HEK293 (cell line): ENCODE measurements at regions of chr14 and their contacts with region 1.

Region 1: DNA sequence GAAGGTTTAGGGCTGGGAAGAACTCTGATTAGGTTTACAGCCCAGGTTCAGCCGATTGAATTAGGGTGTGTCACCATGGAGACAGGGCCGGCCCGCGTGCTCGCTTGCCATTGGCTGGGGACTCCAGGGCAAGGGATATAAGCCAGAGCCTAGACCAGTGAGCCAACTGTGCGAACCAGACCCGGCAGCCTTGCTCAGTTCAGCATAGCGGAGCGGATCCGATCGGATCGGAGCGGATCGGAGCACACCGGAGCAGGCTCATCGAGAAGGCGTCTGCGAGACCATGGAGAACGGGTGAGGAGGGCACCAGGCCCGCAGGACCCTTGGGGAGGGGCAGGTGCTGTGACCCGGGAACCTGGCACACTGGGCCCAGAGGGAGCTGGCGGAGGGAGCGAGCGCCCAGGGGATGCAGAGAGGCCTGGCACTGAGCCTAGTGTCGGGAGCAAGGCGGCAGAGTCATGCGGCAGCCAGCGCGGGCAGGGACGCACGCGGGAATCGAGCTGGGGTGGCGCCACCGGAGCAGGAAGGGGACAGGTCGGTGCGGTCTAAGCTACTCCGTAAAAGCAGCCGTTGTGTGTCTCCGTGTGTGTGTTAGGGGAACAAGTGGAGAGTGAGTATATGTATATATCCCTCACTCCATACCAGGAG is at the start of gene PNP:
- H3K4me3 ChIP-seq: peak within 1 kb of the TSS; percentile 71
- H3K27ac ChIP-seq: peak within 1 kb of the TSS; percentile 84
- H3K4me1 ChIP-seq: peaks cover 5% of the 10 kb centered on the region
- CTCF ChIP-seq: peak; percentile 56

Region 2: DNA sequence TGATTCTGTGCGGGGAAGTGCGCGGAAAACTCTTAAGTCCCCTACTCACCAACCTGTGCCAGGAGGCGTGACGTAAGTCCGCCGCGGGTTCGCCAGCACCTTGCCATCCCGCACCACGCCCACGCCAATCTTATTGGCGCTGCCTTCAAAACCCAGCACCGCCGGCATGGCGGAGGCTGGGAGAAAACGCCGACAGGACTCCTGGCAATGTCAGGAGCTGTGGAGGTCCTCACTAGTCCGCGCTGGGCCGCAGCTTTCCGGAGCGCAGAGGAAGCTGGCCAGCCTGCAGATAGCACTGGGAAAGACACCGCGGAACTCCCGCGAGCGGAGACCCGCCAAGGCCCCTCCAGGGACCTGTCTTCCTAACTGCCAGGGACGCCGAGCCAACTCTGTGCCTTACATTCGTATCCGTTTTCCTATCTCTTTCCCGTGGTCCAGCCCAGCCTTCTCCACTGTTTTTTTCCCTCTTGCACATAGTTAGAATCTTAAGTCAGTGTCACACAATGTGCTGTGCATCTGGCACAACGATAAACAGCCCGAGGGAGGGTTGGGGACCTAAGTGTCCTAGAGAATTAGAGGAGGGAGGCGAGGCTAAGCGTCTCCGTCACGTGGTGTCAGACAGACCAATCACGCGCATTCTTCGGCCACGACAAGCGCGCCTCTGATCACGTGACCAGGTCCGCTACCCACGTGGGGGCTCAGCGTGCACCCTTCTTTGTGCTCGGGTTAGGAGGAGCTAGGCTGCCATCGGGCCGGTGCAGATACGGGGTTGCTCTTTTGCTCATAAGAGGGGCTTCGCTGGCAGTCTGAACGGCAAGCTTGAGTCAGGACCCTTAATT is 14.6 kb before region 1 on chr14 and contains the starts of genes APEX1 and OSGEP:
- CTCF ChIA-PET with region 1: no interaction called
- POLR2A ChIA-PET with region 1: interaction called, 41 read pairs
- H3K4me3 ChIP-seq: peak within 1 kb of the TSS; percentile 91
- H3K27ac ChIP-seq: peak within 1 kb of the TSS; percentile 87
- H3K4me1 ChIP-seq: no peaks in the 10 kb centered on the region; the same call in none of the 2 replicates
- CTCF ChIP-seq: no peak; the same call in 1 of the 2 replicates